Activated CD4-positive, alpha-beta T cell treated with anti-CD3 and anti-CD28 coated beads for 36 hours (primary cell): ENCODE measurements at regions of chr10 and their contacts with region 1.

Region 1: GRCh38 chr10:97210543-97210961 is 24.8 kb upstream of the SLIT1 start:
- DNase-seq: peak; percentile 82
- ATAC-seq: peak; percentile 77
- H3K4me3 Mint-ChIP-seq: no peak overlapping the region
- H3K27ac Mint-ChIP-seq: no peak overlapping the region
- H3K4me1 Mint-ChIP-seq: no peaks in the 10 kb centered on the region
- H3K27me3 Mint-ChIP-seq: no peaks in the 10 kb centered on the region

Region 2: GRCh38 chr10:97037365-97038361 is 172.9 kb before region 1 on chr10:
- CTCF ChIA-PET with region 1: interaction called, 51 read pairs
- POLR2A ChIA-PET with region 1: no interaction called
- intact Hi-C with region 1: loop called in 1 of 2 experiments (anchors 1 kb)
- DNase-seq: peak; percentile 87
- ATAC-seq: peak; percentile 96
- H3K4me3 Mint-ChIP-seq: peak overlapping the region; percentile 45
- H3K27ac Mint-ChIP-seq: no peak overlapping the region
- H3K4me1 Mint-ChIP-seq: peaks cover 12% of the 10 kb centered on the region
- H3K27me3 Mint-ChIP-seq: no peaks in the 10 kb centered on the region

Region 3: DNA sequence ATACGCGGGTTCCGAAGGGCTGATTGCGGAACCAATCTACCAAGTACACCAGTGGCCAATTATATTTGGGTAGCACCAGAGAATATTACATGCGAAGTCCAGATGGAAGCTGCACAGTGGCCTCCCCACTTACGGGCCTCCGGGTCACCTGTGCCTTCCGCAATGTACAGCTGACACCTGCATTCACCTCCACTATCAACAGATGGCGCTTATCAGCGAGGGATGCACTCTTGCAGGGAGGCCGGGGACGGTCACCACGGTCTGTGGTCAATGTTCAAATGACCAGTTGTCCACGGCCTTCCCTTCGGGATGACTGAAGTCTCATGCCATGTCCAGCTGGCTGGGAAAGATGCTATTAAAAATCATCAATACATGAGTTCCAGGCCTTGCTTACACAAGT is 72.4 kb before region 1 on chr10:
- CTCF ChIA-PET with region 1: interaction called, 13 read pairs
- POLR2A ChIA-PET with region 1: no interaction called
- intact Hi-C with region 1: no loop called
- DNase-seq: no peak
- ATAC-seq: no peak
- H3K4me3 Mint-ChIP-seq: no peak overlapping the region
- H3K27ac Mint-ChIP-seq: no peak overlapping the region
- H3K4me1 Mint-ChIP-seq: no peaks in the 10 kb centered on the region
- H3K27me3 Mint-ChIP-seq: peaks cover 2% of the 10 kb centered on the region

Region 4: GRCh38 chr10:97196223-97197029 is 14.1 kb before region 1 on chr10:
- CTCF ChIA-PET with region 1: interaction called, 106 read pairs
- POLR2A ChIA-PET with region 1: no interaction called
- intact Hi-C with region 1: no loop called
- DNase-seq: peak; percentile 77
- ATAC-seq: peak; percentile 93
- H3K4me3 Mint-ChIP-seq: peak overlapping the region; percentile 62
- H3K27ac Mint-ChIP-seq: no peak overlapping the region
- H3K4me1 Mint-ChIP-seq: peaks cover 4% of the 10 kb centered on the region
- H3K27me3 Mint-ChIP-seq: peaks cover 11% of the 10 kb centered on the region

Region 5: GRCh38 chr10:97234400-97234799 is 23.8 kb after region 1 on chr10:
- CTCF ChIA-PET with region 1: interaction called, 27 read pairs
- POLR2A ChIA-PET with region 1: no interaction called
- intact Hi-C with region 1: no loop called
- DNase-seq: no peak
- ATAC-seq: no peak
- H3K4me3 Mint-ChIP-seq: no peak overlapping the region
- H3K27ac Mint-ChIP-seq: no peak overlapping the region
- H3K4me1 Mint-ChIP-seq: peaks cover 17% of the 10 kb centered on the region
- H3K27me3 Mint-ChIP-seq: no peaks in the 10 kb centered on the region

Region 6: GRCh38 chr10:97250952-97251351 is 40.4 kb after region 1 on chr10:
- CTCF ChIA-PET with region 1: no interaction called
- POLR2A ChIA-PET with region 1: no interaction called
- intact Hi-C with region 1: no loop called
- DNase-seq: no peak
- ATAC-seq: no peak
- H3K4me3 Mint-ChIP-seq: no peak overlapping the region
- H3K27ac Mint-ChIP-seq: no peak overlapping the region
- H3K4me1 Mint-ChIP-seq: peaks cover 3% of the 10 kb centered on the region
- H3K27me3 Mint-ChIP-seq: no peaks in the 10 kb centered on the region